Activated T-helper 1 cell treated with anti-CD3 and anti-CD28 coated beads, Interleukin-12 subunit alpha, Interleukin-12 subunit beta, Interleukin-2, Interleukin-4 antibody, amounts not matched to agents 30 ng/mL and 10 ng/mL and 1 ng/mL, durations not matched to agents 14 hours and 24 hours and 36 hours (primary cell): ENCODE measurements at regions of chr9 and their contacts with region 1.

Region 1: GRCh38 chr9:112074250-112075008 is 100.7 kb downstream of the SUSD1 start:
- DNase-seq: peak; percentile 35
- H3K4me3 Mint-ChIP-seq: no peak overlapping the region
- H3K27ac Mint-ChIP-seq: no peak overlapping the region
- H3K4me1 Mint-ChIP-seq: peaks cover 36% of the 10 kb centered on the region
- H3K27me3 Mint-ChIP-seq: no peaks in the 10 kb centered on the region

Region 2: DNA sequence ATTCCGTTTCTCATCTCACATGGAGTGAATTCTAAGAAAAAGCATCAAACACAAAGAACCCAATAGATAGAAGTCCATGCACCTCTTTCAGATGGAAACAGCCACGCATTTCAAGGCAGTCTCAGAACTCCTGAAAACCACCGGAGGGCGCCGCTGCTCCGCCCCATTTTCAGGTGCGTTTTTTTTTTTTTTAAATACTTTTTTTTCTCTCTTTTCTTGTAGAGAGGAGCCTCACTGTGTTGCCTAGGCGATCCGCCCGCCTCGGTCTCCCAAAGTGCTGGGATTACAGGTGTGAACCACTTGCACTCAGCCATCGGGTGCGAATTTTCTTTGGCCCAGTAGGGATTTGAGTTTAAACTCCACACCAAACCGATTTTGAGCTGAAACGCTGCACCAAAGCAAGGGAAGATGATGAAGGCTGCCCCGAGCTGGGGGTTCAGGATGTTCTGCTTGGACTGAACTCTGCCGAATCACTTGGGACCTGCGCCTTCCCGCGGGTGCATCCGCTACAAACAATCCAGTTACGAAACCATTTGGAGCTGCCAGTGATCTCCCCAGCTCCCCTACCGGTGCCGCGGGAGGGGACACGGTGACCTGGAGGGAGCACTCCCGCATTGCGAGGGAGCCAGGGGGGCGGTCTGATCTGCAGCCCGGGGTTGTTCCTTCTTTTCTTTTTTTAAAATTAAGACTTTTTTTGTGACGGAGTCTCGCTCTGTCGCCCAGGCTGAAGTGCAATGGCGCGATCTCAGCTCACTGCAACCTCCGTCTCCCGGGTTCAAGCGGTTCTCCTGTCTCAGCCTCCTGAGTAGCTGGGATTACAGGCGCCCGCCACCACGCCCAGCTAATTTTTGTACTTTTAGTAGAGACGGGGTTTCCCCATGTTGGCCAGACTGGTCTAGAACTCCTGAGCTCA is 476.4 kb before region 1 on chr9:
- intact Hi-C with region 1: loop called (anchors 2 kb)
- DNase-seq: peak; percentile 35
- H3K4me3 Mint-ChIP-seq: peak overlapping the region; percentile 83
- H3K27ac Mint-ChIP-seq: no peak overlapping the region
- H3K4me1 Mint-ChIP-seq: peaks cover 24% of the 10 kb centered on the region
- H3K27me3 Mint-ChIP-seq: peaks cover 33% of the 10 kb centered on the region

Region 3: DNA sequence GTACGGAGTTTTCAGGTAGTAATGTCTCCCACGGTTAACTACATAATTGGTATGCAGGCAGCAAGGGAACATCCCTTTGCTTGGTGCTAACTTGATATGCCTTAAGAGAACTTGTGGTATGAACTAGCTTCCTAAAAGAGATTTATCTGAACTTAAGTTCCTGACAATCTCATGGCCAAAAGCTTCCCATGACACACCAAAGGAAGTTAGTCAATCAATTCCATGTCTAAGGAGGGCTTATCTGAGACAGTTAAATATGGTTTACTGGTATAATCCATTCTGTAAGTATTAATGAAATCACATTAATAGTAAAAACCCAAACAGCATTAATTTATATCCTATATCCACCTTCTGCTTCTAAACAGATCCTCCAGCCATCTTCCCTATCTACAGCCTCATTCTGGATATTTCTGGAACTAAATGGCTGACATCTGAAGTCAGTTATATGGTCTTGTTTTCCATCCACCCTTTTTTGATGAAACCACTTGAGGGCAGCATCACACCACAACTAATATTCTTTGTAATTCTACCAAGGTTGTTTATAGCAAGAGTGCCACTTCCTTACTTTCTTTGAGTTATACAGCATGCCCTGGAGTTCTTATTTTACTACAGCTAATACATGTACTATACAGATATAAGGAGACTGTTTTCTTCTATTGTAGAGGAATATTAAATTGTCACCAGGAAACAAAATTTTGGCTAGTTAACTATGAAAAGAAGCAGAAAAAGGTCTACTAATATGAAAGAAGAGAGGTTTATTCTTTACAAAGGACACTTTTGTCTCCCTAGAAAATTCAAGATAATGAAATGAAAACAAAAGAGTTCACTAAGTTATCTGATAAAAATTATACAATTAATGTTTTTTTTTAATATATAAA is 314.4 kb before region 1 on chr9:
- intact Hi-C with region 1: loop called (anchors 1 kb)
- DNase-seq: peak; percentile 39
- H3K4me3 Mint-ChIP-seq: no peak overlapping the region
- H3K27ac Mint-ChIP-seq: no peak overlapping the region
- H3K4me1 Mint-ChIP-seq: no peaks in the 10 kb centered on the region
- H3K27me3 Mint-ChIP-seq: peaks cover 2% of the 10 kb centered on the region

Region 4: GRCh38 chr9:111828193-111828592 is 246.2 kb before region 1 on chr9:
- intact Hi-C with region 1: loop called (anchors 1 kb)
- DNase-seq: no peak
- H3K4me3 Mint-ChIP-seq: no peak overlapping the region
- H3K27ac Mint-ChIP-seq: no peak overlapping the region
- H3K4me1 Mint-ChIP-seq: no peaks in the 10 kb centered on the region
- H3K27me3 Mint-ChIP-seq: peaks cover 2% of the 10 kb centered on the region

Region 5: GRCh38 chr9:111870774-111871498 is 203.5 kb before region 1 on chr9:
- intact Hi-C with region 1: loop called (anchors 1 kb)
- DNase-seq: peak; percentile 6
- H3K4me3 Mint-ChIP-seq: no peak overlapping the region
- H3K27ac Mint-ChIP-seq: peak overlapping the region; percentile 49
- H3K4me1 Mint-ChIP-seq: peaks cover 20% of the 10 kb centered on the region
- H3K27me3 Mint-ChIP-seq: peaks cover 30% of the 10 kb centered on the region

Region 6: GRCh38 chr9:112012026-112012902 is 62.2 kb before region 1 on chr9:
- intact Hi-C with region 1: loop called (anchors 2 kb)
- DNase-seq: no peak
- H3K4me3 Mint-ChIP-seq: no peak overlapping the region
- H3K27ac Mint-ChIP-seq: no peak overlapping the region
- H3K4me1 Mint-ChIP-seq: peaks cover 21% of the 10 kb centered on the region
- H3K27me3 Mint-ChIP-seq: peaks cover 50% of the 10 kb centered on the region

Region 7: GRCh38 chr9:112029921-112030444 is 44.4 kb before region 1 on chr9:
- intact Hi-C with region 1: no loop called
- DNase-seq: no peak
- H3K4me3 Mint-ChIP-seq: peak overlapping the region; percentile 1
- H3K27ac Mint-ChIP-seq: peak overlapping the region; percentile 36
- H3K4me1 Mint-ChIP-seq: peaks cover 61% of the 10 kb centered on the region
- H3K27me3 Mint-ChIP-seq: peaks cover 11% of the 10 kb centered on the region

Region 8: GRCh38 chr9:112112941-112113681 is 38.7 kb after region 1 on chr9:
- intact Hi-C with region 1: no loop called
- DNase-seq: no peak
- H3K4me3 Mint-ChIP-seq: no peak overlapping the region
- H3K27ac Mint-ChIP-seq: no peak overlapping the region
- H3K4me1 Mint-ChIP-seq: no peaks in the 10 kb centered on the region
- H3K27me3 Mint-ChIP-seq: no peaks in the 10 kb centered on the region